ENCODE measurements at regions of chr4 and their contacts with region 1.

Region 1: GRCh38 chr4:73662709-73663546 is 42.7 kb upstream of the RASSF6 start:
- H3K4me3 ChIP-seq: no peak overlapping the region
- H3K27ac ChIP-seq: no peak overlapping the region
- H3K4me1 ChIP-seq: no peaks in the 10 kb centered on the region
- CTCF ChIP-seq: no peak; the same call in 1 of the 2 replicates

Region 2: GRCh38 chr4:73620115-73620792 is 42.7 kb before region 1 on chr4 and contains the start of gene RASSF6:
- CTCF ChIA-PET with region 1: no interaction called
- POLR2A ChIA-PET with region 1: no interaction called
- H3K4me3 ChIP-seq: peak within 1 kb of the TSS; percentile 31
- H3K27ac ChIP-seq: no peak within 1 kb of the TSS
- H3K4me1 ChIP-seq: peaks cover 4% of the 10 kb centered on the region
- CTCF ChIP-seq: no peak

Region 3: DNA sequence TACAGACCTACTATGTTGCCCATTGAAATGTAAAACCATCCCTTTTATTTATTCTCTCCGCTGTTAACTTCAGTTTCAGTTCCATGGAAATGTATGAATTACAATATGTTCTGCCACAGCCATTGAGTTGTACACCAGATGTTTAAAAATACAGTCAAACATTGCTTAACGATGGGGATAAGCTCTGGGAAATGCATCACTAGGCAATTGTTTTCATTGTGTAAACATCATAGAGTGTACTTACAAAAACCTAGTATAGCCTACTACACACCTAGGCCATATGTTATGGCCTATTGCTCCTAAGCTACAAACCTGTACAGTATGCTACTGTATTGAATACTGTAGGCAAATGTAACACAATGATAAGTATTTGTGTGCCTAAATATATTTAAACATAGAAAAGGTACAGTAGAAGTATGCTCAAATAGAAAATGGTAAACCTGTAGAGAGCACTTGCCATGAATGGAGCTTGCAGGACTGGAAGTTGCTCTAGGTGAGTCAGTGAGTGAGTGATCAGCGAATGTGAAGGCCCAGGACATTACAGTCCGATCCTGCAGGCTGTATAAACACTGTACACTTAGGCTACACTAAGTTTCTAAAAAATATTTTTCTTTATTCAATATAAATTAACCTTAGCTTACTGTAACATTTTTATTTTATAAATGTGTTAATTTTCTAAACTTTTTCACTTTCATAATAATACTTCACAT is 187.5 kb after region 1 on chr4:
- CTCF ChIA-PET with region 1: no interaction called
- POLR2A ChIA-PET with region 1: no interaction called
- H3K4me3 ChIP-seq: no peak overlapping the region
- H3K27ac ChIP-seq: no peak overlapping the region
- H3K4me1 ChIP-seq: no peaks in the 10 kb centered on the region
- CTCF ChIP-seq: no peak

Region 4: GRCh38 chr4:73864365-73864764 is 201.4 kb after region 1 on chr4:
- CTCF ChIA-PET with region 1: interaction called, 10 read pairs
- POLR2A ChIA-PET with region 1: no interaction called
- H3K4me3 ChIP-seq: no peak overlapping the region
- H3K27ac ChIP-seq: no peak overlapping the region
- H3K4me1 ChIP-seq: no peaks in the 10 kb centered on the region
- CTCF ChIP-seq: peak; percentile 31; the same call in 1 of the 2 replicates

Region 5: GRCh38 chr4:74133786-74134499 is 471.0 kb after region 1 on chr4:
- CTCF ChIA-PET with region 1: interaction called, 29 read pairs
- POLR2A ChIA-PET with region 1: no interaction called
- H3K4me3 ChIP-seq: no peak overlapping the region
- H3K27ac ChIP-seq: no peak overlapping the region
- H3K4me1 ChIP-seq: no peaks in the 10 kb centered on the region
- CTCF ChIP-seq: peak; percentile 29; the same call in 1 of the 2 replicates

Region 6: GRCh38 chr4:74258963-74259362 is 596.0 kb after region 1 on chr4:
- CTCF ChIA-PET with region 1: no interaction called
- POLR2A ChIA-PET with region 1: no interaction called
- H3K4me3 ChIP-seq: no peak overlapping the region
- H3K27ac ChIP-seq: no peak overlapping the region
- H3K4me1 ChIP-seq: no peaks in the 10 kb centered on the region
- CTCF ChIP-seq: no peak

Measured in HEK293 (cell line).